AG04449 (cell line): ENCODE measurements at regions of chr6 and their contacts with region 1.

Region 1: GRCh38 chr6:45922728-45923351 is 92.8 kb downstream of the CLIC5 start:
- DNase-seq: peak; percentile 67
- H3K4me3 ChIP-seq: no peak overlapping the region
- CTCF ChIP-seq: peak; percentile 68

Region 2: DNA sequence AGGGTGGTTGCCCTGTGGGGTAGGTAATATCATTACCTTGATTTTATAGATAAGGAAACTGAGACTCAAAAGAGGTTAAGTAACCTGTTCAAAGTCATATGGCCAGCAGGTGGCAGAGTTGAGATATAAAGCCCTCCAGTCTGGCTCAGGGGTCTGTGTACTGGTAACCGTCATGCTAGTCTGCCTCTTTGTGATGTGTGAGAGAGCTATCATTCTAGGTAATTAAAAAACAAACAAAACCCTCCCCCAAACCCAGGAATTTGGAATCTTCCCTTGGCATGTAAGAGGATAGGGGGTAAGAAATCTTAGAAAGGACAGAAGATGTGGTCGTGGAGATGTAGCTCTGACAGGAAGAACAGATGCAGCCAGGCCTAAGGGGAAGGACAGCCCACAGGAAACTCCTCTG is 1329.3 kb before region 1 on chr6:
- CTCF ChIA-PET with region 1: interaction called, 20 read pairs
- POLR2A ChIA-PET with region 1: no interaction called
- DNase-seq: no peak
- H3K4me3 ChIP-seq: no peak overlapping the region
- CTCF ChIP-seq: peak; percentile 51

Region 3: GRCh38 chr6:45714741-45715507 is 207.9 kb before region 1 on chr6:
- CTCF ChIA-PET with region 1: interaction called, 32 read pairs
- POLR2A ChIA-PET with region 1: no interaction called
- DNase-seq: peak; percentile 68
- H3K4me3 ChIP-seq: no peak overlapping the region
- CTCF ChIP-seq: peak; percentile 78

Region 4: DNA sequence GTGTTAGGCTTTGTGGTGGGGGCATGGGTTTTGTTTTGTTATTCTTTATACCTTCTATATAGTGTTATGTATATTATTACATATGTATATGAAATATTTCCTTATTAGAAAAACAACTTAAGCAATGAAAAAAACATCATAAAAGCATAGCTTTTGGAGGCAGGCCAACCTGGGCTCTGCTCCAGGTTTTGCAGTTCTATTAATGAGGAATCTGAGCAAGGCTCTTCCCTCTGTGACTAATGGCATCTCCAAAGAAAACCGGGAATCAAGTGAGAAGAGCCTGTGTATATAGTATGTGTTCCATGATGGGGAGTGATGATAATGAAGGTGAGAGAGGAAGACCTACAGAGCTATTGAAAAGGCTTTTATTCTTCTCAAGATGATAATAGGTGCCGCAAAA is 198.3 kb before region 1 on chr6:
- CTCF ChIA-PET with region 1: interaction called, 21 read pairs
- POLR2A ChIA-PET with region 1: no interaction called
- DNase-seq: peak; percentile 69
- H3K4me3 ChIP-seq: no peak overlapping the region
- CTCF ChIP-seq: no peak

Region 5: DNA sequence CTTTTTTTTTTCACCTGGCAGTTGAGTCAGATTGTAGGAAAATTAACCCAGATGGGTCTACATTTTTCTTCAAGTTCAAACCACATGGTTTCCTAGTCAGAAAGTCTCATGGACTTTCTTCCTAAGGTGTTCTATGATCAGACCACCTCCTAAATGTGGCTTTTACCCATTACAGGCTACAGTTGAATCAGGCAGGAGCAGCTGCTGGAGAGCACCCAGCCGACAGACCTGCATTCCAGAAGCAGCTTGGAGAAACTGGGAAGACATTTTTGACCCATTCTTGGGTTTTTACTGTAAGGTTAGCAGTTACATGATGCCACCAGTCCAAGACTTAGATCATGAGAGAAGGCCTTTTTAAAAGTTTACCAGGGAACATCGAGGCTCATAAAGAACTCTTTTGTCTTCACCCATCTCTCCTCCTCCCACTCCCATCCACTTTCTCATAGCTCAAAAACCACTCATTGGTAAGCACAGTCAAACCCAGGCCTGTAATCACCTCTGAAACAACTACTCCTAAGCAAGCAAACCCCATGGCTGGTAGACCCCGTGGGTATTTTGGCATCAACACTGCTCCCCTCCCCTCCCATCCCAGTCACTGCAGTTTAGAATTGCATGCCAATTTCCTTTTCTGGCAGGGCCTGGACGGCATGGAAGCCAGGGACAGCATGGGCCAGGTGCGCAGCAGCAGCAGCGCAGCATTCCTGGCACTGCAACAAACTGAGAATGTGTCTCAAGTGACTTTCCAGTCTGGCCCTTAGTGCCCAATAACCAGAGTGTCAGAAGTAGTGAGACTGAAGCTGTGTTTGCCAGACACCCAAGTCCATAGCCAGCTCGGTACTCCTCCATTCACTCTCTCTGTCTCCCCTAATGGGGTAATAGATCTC is 20.8 kb before region 1 on chr6:
- CTCF ChIA-PET with region 1: interaction called, 10 read pairs
- POLR2A ChIA-PET with region 1: no interaction called
- DNase-seq: no peak
- H3K4me3 ChIP-seq: no peak overlapping the region
- CTCF ChIP-seq: no peak

Region 6: DNA sequence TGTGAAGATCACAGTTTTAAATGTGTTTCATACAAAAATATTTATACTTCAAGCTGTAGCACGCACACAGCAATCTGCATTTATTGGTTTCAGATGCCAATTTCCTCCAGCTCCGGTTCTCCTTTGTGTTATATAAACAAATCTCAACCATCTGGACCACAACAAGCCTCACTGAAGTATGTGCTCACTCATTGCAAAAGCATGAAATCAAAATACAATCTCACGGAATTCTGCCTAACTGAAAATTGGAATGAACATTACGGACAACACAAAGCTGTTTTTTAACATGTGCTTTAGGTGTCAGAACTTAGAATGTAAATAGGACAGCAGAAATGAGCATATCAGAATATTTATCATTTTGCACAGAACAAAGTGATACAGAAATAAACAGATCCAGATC is 530.4 kb after region 1 on chr6:
- CTCF ChIA-PET with region 1: no interaction called
- POLR2A ChIA-PET with region 1: no interaction called
- DNase-seq: peak; percentile 57
- H3K4me3 ChIP-seq: no peak overlapping the region; the same call in 1 of the 2 replicates
- CTCF ChIP-seq: no peak